A549 (cell line): ENCODE measurements at regions of chr5 and their contacts with region 1.

Region 1: GRCh38 chr5:148957591-148958202 is 105.2 kb downstream of the SH3TC2 start:
- DNase-seq: peak in 1 of 2 experiments; percentile 30
- ATAC-seq: peak in 1 of 2 experiments; percentile 86; a peak in 3 of 6 replicates
- H3K4me3 ChIP-seq: no peak overlapping the region
- H3K27ac ChIP-seq: no peak overlapping the region
- H3K4me1 ChIP-seq: no peaks in the 10 kb centered on the region
- CTCF ChIP-seq: peak; percentile 71
- EP300 ChIP-seq: no peak
- POLR2A ChIP-seq: no peak
- RAD21 ChIP-seq: peak; percentile 61 to 73

Region 2: DNA sequence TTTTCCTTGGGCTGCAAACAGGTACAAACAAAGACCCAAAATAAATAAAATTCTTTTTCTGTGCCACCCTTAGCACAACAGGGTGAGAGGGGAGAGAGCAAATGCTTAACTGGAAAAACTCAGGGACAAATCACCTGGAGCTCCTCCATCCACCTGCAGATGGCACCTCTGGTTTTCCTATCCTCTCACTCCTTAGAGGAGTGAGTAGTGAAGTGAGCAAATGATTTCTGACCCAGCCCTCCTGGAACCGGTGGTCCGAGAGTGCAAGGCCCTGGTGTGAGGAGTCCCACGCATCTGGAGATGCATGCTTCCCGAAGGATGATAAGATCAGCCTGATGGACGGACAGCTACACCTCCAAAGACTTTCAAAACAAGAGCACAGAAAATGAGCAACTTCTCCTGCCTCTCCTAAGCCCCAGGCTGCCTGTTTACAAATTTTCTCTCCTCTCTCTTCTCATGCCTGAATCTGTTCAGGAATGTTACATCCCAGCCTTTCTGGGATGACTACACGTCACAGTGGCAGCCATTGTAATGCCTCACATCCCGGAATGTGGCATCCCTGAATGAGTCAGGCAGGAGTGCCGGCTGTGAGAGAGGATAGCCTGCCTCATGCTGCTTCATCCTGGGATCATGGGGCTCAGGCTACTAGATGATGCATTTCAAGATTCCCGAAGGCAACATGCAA is 44.8 kb before region 1 on chr5:
- CTCF ChIA-PET with region 1: interaction called, 34 read pairs
- POLR2A ChIA-PET with region 1: no interaction called
- DNase-seq: peak; percentile 82
- ATAC-seq: peak; percentile 91 to 96
- H3K4me3 ChIP-seq: no peak overlapping the region
- H3K27ac ChIP-seq: peak overlapping the region; percentile 43 to 59; a peak in 5 of 6 replicates
- H3K4me1 ChIP-seq: peaks cover 37% of the 10 kb centered on the region
- CTCF ChIP-seq: peak; percentile 52
- EP300 ChIP-seq: peak in 1 of 2 experiments; percentile 29; a peak in 1 of 5 replicates
- POLR2A ChIP-seq: no peak
- RAD21 ChIP-seq: peak; percentile 65 to 66

Region 3: GRCh38 chr5:148991606-148992005 is 33.9 kb after region 1 on chr5:
- CTCF ChIA-PET with region 1: interaction called, 12 read pairs
- POLR2A ChIA-PET with region 1: no interaction called
- DNase-seq: no peak
- ATAC-seq: no peak
- H3K4me3 ChIP-seq: no peak overlapping the region
- H3K27ac ChIP-seq: no peak overlapping the region
- H3K4me1 ChIP-seq: no peaks in the 10 kb centered on the region
- CTCF ChIP-seq: no peak
- EP300 ChIP-seq: no peak
- POLR2A ChIP-seq: no peak
- RAD21 ChIP-seq: no peak